ENCODE measurements at regions of chr1 and their contacts with region 1.

Region 1: GRCh38 chr1:205711104-205712020 is 31.1 kb upstream of the SLC45A3 start:
- DNase-seq: peak in 2 of 4 donors; percentile 66 to 87
- ATAC-seq: peak; percentile 91
- H3K4me3 ChIP-seq: no peak overlapping the region
- H3K27ac ChIP-seq: no peak overlapping the region
- H3K4me1 ChIP-seq: peaks cover 0 to 28% of the 10 kb centered on the region in 2 donors
- H3K27me3 ChIP-seq: no peaks in the 10 kb centered on the region
- CTCF ChIP-seq: peak; percentile 74 to 79

Region 2: DNA sequence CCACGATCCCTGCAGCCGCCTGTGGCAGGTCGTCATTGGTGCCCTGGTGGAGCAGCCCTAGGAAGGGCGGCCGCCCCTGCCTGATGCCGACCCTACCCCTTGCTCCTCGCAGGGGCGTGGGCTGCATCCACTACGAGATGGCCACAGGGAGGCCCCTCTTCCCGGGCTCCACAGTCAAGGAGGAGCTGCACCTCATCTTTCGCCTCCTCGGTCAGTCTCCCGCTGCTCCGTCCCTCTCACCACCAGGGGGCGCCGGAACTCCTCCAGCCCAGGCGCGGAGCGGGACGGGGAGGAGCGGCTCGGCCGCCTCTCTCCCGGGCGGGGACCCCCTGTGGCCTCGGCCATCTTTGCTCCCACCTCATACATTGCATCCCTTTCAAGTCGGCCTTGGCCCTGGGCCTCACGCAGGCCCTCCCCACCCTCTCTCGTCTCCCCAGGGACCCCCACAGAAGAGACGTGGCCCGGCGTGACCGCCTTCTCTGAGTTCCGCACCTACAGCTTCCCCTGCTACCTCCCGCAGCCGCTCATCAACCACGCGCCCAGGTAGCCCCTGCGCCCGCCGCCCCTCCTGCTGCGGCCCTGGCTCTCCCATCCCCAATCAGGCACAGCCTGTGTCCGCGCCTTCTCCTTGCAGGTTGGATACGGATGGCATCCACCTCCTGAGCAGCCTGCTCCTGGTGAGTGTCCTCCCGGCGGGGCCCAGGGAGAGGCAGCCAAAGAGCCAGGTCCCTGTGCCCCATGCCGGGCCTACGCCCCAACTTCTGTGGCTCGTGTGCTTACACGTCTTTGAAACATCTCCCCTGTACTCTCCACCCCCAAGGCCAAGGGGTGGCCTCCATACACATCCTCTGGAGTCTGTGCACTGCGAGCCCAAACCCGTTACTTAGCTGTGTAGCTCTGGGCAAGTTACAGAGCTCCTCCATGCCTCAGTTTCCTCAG is 182.2 kb before region 1 on chr1:
- intact Hi-C with region 1: no loop called
- DNase-seq: peak; percentile 69 to 97 (median 84)
- ATAC-seq: peak; percentile 90
- H3K4me3 ChIP-seq: peak overlapping the region; percentile 23 to 28
- H3K27ac ChIP-seq: no peak overlapping the region
- H3K4me1 ChIP-seq: peaks cover 0 to 9% of the 10 kb centered on the region in 2 donors
- H3K27me3 ChIP-seq: no peaks in the 10 kb centered on the region
- CTCF ChIP-seq: peak; percentile 91 to 95

Region 3: GRCh38 chr1:205668951-205669340 is 42.4 kb before region 1 on chr1:
- intact Hi-C with region 1: loop called in 1 of 2 experiments (anchors 10 kb)
- DNase-seq: no peak
- ATAC-seq: peak; percentile 30
- H3K4me3 ChIP-seq: no peak overlapping the region
- H3K27ac ChIP-seq: no peak overlapping the region
- H3K4me1 ChIP-seq: peaks cover 0 to 16% of the 10 kb centered on the region in 2 donors
- H3K27me3 ChIP-seq: peaks cover 0 to 7% of the 10 kb centered on the region in 2 donors
- CTCF ChIP-seq: no peak

Region 4: DNA sequence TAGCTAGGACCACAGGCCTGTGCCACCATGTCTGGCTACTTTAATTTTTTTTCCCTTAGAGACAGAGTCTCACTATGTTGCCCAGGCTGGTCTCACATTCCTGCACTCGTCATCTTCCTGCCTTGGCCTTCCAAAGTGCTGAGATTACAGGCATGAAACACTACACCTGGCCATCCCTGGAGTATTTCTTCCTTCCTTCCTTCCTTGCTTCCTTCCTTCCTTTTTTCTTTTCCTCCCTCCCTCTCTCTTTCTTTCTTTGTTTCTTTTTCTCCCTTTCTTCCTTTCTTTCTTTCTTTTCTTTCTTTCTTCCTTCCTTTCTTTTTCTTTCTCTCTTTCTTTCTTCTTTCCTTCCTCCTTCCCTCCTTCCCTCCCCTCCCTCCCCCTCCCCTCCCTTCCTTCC is 185.0 kb after region 1 on chr1:
- intact Hi-C with region 1: no loop called
- DNase-seq: no peak
- ATAC-seq: no peak
- H3K4me3 ChIP-seq: no peak overlapping the region
- H3K27ac ChIP-seq: no peak overlapping the region
- H3K4me1 ChIP-seq: no peaks in the 10 kb centered on the region
- H3K27me3 ChIP-seq: peaks cover 0 to 8% of the 10 kb centered on the region in 2 donors
- CTCF ChIP-seq: no peak

Measured in left lung (tissue), 14 donors.